H1 (cell line): ENCODE measurements at regions of chr13 and their contacts with region 1.

Region 1: DNA sequence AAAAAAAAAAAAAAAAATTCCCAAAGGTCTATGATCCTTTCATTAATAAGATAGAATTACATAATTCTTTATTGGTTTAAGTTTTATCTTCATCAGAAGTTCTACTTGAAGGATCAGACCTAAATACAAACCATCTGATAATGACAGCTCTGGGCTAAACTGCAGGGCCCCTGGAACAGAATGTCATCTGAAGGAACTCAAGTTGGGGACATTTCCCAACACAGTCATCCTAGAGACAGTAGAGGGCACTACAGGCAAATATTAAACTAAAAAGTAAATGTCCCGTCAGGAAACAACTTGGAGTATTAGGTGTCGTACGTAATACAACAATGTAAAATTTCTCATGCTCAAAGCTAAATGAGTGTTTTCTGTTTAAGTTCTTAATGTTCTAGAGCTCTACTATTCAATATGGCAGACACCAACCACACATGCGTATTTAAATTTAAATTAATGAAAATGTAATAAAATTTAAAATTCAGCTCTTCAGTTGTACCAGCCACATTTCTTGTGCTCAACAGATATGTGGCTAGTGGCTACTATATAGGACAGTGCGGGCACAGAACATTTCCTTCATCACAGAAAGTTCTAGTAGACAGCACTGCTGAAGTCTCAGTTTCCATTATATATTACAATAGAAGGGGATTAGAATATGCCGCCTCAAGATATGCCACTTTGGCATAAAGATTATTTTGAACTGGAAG is 21.8 kb upstream of the NAXD start:
- DNase-seq: no peak
- H3K4me3 ChIP-seq: no peak overlapping the region
- H3K27ac ChIP-seq: no peak overlapping the region
- H3K4me1 ChIP-seq: peaks cover 0 to 3% (median 2%) of the 10 kb centered on the region in 4 experiments; a peak in 4 of 7 replicates
- H3K27me3 ChIP-seq: no peaks in the 10 kb centered on the region
- CTCF ChIP-seq: peak in 2 of 3 experiments; percentile 59 to 60; a peak in 3 of 4 replicates
- EP300 ChIP-seq: no peak
- POLR2A ChIP-seq: no peak
- RAD21 ChIP-seq: peak; percentile 63 to 79

Region 2: GRCh38 chr13:110610955-110611595 is 17.5 kb after region 1 on chr13:
- CTCF ChIA-PET with region 1: interaction called, 11 read pairs
- POLR2A ChIA-PET with region 1: no interaction called
- DNase-seq: no peak
- H3K4me3 ChIP-seq: no peak overlapping the region
- H3K27ac ChIP-seq: no peak overlapping the region
- H3K4me1 ChIP-seq: peaks cover 0 to 6% (median 4%) of the 10 kb centered on the region in 4 experiments; a peak in 5 of 7 replicates
- H3K27me3 ChIP-seq: peaks cover 0 to 2% (median 0%) of the 10 kb centered on the region in 4 experiments; a peak in 2 of 7 replicates
- CTCF ChIP-seq: no peak
- EP300 ChIP-seq: no peak
- POLR2A ChIP-seq: no peak
- RAD21 ChIP-seq: no peak

Region 3: DNA sequence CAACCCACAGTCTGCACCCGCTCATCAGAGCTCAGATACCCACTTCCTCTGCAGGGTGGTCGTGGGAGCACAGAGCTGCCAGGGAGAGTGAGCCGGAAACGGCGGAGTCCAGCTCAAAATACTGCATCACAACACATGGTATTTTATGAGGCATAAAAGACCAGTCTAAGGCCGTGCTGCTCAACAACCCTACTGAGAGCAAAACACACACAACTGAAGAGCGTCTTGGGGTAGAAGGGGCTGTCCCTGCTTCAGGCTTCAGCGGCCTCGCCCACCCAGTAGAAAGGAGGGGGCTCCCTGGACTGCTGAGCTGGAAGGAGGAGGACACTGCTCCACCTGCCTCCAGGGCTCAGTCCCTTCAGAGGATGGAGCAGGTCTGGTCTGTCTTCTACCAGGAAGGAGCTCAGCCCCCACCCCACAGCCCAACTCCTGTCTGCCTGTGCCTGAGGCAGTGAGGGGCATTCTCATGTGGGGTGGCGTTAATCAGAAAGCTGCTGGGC is 58.7 kb after region 1 on chr13:
- CTCF ChIA-PET with region 1: interaction called, 16 read pairs
- POLR2A ChIA-PET with region 1: no interaction called
- DNase-seq: peak in 1 of 2 experiments; percentile 44
- H3K4me3 ChIP-seq: no peak overlapping the region
- H3K27ac ChIP-seq: no peak overlapping the region
- H3K4me1 ChIP-seq: no peaks in the 10 kb centered on the region; a peak in 1 of 7 replicates
- H3K27me3 ChIP-seq: no peaks in the 10 kb centered on the region
- CTCF ChIP-seq: no peak
- EP300 ChIP-seq: no peak
- POLR2A ChIP-seq: no peak
- RAD21 ChIP-seq: no peak